ENCODE measurements at regions of chr1 and their contacts with region 1.

Region 1: GRCh38 chr1:89598450-89599331 is 34.2 kb upstream of the LRRC8C start:
- DNase-seq: no peak
- ATAC-seq: peak; percentile 77

Region 2: DNA sequence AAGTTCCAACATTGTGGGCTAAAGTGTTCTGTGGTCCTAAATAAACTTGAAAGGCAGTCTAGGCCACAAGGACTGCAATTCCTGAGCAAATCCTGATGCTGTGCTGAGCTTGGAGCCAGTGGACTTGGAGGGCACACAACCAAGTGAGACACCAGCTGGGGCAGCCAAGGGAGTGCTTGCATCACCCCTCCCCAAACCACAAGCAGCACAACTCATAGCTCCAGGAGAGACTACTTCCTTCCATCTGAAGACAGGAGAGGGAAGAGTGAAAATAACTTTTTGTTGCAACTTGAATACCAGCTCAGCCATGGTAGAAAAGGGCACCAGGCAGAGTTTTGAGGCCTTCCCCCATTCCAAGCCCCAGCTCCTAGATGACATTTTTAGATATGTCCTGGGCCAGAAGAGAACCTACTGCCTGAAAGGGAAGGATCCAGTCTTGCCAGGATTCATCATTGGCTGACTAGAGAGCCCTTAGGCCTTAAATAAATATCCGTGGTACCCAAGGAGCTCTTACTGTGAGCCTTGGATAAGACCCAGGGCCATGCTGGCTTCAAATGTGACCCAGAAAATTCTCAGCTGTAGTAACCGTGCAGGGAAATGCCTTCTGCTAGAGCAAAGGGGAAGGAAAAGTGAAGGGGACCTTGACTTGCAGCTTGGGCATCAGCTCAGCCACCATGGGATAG is 109.5 kb before region 1 on chr1:
- intact Hi-C with region 1: loop called (anchors 5 kb)
- DNase-seq: peak; percentile 46
- ATAC-seq: no peak

Region 3: GRCh38 chr1:89524369-89525168 is 74.1 kb before region 1 on chr1 and contains the start of gene LRRC8B:
- intact Hi-C with region 1: loop called (anchors 10 kb)
- DNase-seq: peak; percentile 96
- ATAC-seq: peak; percentile 100
- total RNA-seq, gene LRRC8B: 2.5 TPM

Region 4: GRCh38 chr1:89535537-89535936 is 63.2 kb before region 1 on chr1:
- intact Hi-C with region 1: no loop called
- DNase-seq: no peak
- ATAC-seq: no peak